Right ventricle myocardium inferior (tissue), 1 donor: ENCODE measurements at regions of chr19 and their contacts with region 1.

Region 1: GRCh38 chr19:41859618-41860418 is at the start of gene RPS19:
- DNase-seq: peak; percentile 99
- ATAC-seq: peak; percentile 97
- total RNA-seq, gene RPS19: 717 TPM

Region 2: GRCh38 chr19:41844601-41845000 is 15.2 kb before region 1 on chr19 and contains the start of gene LYPD4:
- intact Hi-C with region 1: no loop called
- DNase-seq: no peak
- ATAC-seq: no peak
- total RNA-seq, gene LYPD4: not detected

Region 3: GRCh38 chr19:41883821-41884733 is 24.3 kb after region 1 on chr19:
- intact Hi-C with region 1: loop called (anchors 1 kb)
- DNase-seq: peak; percentile 97
- ATAC-seq: peak; percentile 99

Region 4: DNA sequence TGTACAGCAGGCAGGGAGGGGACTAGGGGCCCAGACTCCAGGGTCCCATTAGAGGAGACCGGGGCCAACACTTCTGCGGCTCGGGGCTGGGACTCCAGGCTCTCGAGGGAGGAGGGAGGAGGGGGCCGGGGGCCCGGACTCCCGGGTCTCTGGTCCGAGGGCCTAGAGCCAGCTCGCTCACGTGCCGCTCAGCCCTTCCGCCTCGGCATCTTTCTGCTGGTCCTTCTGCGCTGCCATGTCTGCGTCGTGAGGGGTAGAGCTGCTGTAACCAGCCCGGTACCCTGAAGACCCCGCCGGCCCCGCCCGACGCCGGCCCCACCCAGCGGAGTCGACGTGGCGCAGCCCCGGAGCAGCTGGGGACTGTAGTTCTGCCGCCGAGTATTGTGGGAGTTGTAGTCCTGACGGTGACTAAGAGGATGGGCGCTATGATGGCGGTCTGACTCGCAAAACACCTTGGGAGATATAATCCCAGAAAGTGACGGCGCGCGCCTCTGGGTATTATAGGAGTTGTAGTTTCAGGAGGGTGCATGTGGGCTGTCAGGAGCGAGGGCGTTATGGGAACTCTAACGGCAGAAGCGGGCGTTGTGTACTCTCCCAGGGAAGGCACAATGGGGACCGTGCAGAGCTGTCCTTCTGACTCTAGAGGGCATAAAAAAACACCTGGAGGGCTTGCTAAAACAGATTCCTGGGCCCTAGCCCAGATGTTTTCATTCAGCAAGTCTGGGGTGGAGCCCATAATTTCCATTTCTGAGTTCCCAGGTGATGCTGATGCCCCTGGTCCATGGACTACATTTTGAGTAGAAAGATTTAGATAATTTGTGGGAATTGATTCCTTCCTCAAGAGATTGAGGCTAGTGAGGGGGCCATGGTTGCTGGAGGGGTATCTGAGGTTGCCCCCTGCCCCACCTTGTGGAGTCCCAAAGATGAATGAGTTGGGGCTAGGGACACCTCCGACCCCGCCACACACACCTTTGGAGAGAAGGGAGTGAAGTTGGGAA is 99.5 kb after region 1 on chr19 and contains the start of gene RABAC1:
- intact Hi-C with region 1: loop called (anchors 5 kb)
- DNase-seq: peak; percentile 93
- ATAC-seq: peak; percentile 95
- total RNA-seq, gene RABAC1: 68.4 TPM